ENCODE measurements at regions of chr16 and their contacts with region 1.

Region 1: DNA sequence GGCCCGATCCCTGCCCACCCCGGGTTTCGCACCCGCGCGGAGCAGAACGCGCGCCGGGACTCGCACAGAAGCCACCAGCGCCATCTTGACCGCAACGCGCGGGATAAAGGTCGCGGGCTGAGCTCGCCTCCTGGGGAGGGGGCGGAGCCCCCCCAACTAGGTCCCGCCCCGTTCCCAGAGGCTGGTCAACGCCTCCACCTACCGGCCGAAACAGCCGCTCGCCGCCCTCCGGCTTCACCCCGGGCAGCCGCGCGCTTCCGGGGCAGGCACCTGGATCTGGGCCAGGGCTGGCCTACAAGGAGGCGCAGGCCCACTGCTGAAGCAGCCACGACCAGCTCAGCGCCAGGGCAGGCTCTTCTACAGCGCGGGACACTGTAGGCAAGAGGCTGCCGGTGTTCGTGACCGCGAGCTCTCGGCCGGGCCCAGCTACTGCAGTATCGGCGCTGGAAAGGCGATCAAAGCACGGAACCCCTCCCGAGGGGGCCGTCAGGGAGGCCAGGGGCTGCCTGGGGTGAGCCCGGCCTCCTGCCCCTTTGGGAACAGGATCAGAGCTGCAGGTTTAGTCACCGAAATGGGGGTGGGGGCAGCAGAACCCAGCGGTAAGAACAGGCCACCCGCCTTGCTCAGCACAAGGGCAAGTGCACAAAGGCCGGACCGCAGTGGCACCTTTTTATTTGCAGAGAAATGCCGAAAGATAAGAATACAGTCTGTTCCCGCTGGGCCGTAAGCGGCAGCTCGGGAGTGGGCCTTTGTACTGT is at the start of gene ECI1:
- DNase-seq: peak; percentile 92
- ATAC-seq: peak; percentile 87
- H3K4me3 Mint-ChIP-seq: peak within 1 kb of the TSS; percentile 90
- H3K27ac Mint-ChIP-seq: peak within 1 kb of the TSS; percentile 90
- H3K4me1 Mint-ChIP-seq: peaks cover 5% of the 10 kb centered on the region
- H3K27me3 Mint-ChIP-seq: no peaks in the 10 kb centered on the region
- total RNA-seq, gene ECI1: 23.0 to 41.0 TPM

Region 2: DNA sequence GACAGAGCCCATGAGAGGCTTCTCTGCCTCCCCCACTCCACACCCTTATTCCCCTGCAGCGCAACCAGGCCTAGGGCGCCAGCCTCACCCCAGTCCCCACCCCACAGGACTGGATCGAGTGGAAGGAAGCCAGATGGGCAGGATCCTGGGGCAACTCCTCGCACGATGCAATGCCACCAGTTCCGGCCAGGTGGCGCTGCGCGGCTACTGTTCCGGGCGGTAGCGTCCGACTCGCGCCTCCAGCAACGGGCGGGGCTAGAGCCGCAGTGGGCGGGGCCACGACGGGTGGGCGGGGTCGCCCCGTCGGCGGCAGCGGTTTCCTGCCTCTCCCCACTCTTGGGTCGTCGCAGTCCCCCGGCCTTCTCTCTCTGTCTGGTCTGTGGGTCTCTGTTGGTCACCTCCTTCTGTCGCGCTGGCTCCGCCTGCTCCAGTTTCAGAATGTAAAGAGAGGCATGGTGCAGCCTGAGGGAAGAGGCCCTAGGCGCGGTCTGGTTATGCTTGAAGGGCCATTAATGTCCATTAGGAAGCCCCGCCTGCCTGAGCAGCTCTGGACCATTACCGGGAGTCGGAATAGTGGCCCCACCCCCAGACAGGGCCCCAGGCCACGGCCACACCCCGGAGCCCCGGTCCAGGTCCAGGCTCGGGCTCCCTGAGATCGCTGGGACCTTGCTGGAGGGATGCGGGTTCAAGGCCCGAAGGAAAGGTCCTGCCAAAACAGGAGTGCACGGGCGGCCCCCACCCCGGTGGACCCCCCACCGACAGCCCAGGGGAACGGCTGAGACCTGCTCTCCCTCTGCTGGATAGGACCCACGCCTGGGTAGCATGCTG is 228.3 kb before region 1 on chr16:
- CTCF ChIA-PET with region 1: no interaction called
- POLR2A ChIA-PET with region 1: no interaction called
- intact Hi-C with region 1: loop called in 1 of 2 experiments (anchors 1 kb)
- DNase-seq: peak; percentile 97
- ATAC-seq: peak; percentile 86
- H3K4me3 Mint-ChIP-seq: peak overlapping the region; percentile 46
- H3K27ac Mint-ChIP-seq: no peak overlapping the region
- H3K4me1 Mint-ChIP-seq: peaks cover 15% of the 10 kb centered on the region
- H3K27me3 Mint-ChIP-seq: peaks cover 27% of the 10 kb centered on the region

Region 3: GRCh38 chr16:2147981-2148671 is 103.5 kb before region 1 on chr16 and contains the start of gene RAB26:
- CTCF ChIA-PET with region 1: no interaction called
- POLR2A ChIA-PET with region 1: interaction called, 5 read pairs
- intact Hi-C with region 1: loop called in 1 of 2 experiments (anchors 5 kb)
- DNase-seq: peak; percentile 64
- ATAC-seq: peak; percentile 31
- H3K4me3 Mint-ChIP-seq: peak within 1 kb of the TSS; percentile 38
- H3K27ac Mint-ChIP-seq: no peak within 1 kb of the TSS
- H3K4me1 Mint-ChIP-seq: peaks cover 15% of the 10 kb centered on the region
- H3K27me3 Mint-ChIP-seq: no peaks in the 10 kb centered on the region
- total RNA-seq, gene RAB26: 0.21 TPM in 1 of 2 experiments, not detected in the other

Region 4: DNA sequence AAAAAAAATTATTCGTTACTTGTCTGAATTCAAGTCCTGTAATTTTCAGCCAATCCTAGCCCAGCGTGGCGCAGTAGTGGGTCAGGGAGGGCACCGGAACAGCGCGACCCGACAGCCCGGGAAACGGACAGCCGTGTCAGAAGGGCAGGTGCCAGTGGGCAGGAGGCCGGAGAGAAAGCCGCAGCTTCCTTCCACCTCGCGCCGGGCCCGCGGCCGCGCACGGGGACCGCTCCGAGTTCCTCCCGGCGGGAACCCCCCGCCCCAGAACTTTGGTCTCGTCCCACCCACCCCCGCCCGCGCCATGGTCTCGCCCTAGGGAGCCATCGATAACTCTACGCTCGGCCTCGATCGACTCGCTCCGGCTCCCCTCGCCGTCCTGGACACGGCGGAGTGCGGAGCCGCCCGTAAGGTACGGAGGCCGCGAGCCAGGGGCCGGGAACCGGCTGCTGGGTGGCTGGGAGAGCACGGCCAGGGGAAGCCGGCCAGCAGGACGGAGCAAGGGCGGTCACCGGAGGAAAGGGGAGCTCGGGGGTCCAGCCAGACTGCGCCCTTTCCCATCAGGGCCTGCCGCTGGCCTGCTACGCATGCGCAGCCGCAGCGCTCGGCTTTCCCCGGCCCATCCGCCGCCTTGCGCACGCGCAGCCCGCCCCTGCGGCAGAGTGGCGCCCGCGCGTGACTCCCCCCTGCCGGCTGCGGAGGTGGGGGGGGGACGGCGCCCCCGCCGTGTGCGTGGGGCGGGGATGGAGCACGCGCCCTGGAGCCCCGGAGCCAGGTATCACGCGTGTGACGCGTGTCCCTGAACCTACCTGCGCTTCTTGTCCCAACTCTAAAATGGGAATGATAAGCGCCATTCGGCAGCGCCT is 46.3 kb before region 1 on chr16 and contains the start of gene MLST8:
- CTCF ChIA-PET with region 1: no interaction called
- POLR2A ChIA-PET with region 1: no interaction called
- intact Hi-C with region 1: loop called in 1 of 2 experiments (anchors 1 kb)
- DNase-seq: peak; percentile 92
- ATAC-seq: peak; percentile 84
- H3K4me3 Mint-ChIP-seq: peak within 1 kb of the TSS; percentile 83
- H3K27ac Mint-ChIP-seq: peak within 1 kb of the TSS; percentile 84
- H3K4me1 Mint-ChIP-seq: peaks cover 16% of the 10 kb centered on the region
- H3K27me3 Mint-ChIP-seq: no peaks in the 10 kb centered on the region
- total RNA-seq, gene MLST8: 61.3 to 76.1 TPM

Region 5: DNA sequence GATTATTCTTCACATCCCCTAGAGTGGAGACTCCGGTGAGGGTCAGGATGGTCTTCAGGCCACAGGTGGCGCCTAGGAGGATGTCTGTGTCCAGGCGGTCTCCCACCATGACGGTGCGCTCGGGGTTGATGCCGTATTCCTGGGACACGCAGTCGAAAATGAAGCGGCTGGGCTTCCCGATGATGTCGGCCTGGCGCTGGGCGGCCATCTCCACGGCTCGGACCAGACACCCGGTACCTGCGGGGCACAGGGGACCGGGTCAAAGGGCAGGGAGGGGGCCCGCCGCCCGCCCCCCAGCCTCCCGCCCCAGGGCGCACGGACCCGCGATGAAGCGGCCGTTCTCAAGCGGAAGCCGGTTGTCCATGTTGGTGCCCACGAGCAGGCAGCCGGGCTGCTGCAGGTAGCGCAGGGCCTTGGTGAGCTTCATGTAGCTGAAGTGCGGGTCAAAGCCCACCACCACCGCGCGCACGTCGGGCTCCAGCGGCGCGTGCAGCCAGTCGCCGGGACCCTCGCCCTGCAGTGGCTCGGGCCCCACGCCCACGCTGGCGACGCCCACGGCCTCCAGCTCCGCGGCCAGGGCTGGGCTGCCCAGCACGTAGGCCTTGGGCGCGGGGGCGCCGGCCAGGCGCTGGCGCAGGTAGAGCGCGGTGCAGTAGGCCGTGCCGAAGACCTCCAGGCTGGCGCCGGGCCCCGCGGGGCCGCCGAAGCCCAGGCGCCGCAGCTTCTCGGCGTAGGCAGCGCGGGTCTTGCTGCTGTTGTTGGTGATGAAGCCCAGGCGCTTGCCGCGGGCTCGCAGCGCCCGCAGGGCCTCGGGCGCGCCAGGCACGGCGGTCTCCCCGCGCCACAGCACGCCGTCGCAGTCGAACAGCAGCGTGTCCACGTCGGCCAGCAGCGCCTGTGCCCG is 37.6 kb before region 1 on chr16:
- CTCF ChIA-PET with region 1: no interaction called
- POLR2A ChIA-PET with region 1: interaction called, 11 read pairs
- intact Hi-C with region 1: loop called in 1 of 2 experiments (anchors 1 kb)
- DNase-seq: peak; percentile 40
- ATAC-seq: no peak
- H3K4me3 Mint-ChIP-seq: peak overlapping the region; percentile 79
- H3K27ac Mint-ChIP-seq: peak overlapping the region; percentile 45
- H3K4me1 Mint-ChIP-seq: peaks cover 18% of the 10 kb centered on the region
- H3K27me3 Mint-ChIP-seq: no peaks in the 10 kb centered on the region

Measured in activated CD4-positive, alpha-beta T cell treated with anti-CD3 and anti-CD28 coated beads for 36 hours (primary cell).